AG04449 (cell line): ENCODE measurements at regions of chr2 and their contacts with region 1.

Region 1: DNA sequence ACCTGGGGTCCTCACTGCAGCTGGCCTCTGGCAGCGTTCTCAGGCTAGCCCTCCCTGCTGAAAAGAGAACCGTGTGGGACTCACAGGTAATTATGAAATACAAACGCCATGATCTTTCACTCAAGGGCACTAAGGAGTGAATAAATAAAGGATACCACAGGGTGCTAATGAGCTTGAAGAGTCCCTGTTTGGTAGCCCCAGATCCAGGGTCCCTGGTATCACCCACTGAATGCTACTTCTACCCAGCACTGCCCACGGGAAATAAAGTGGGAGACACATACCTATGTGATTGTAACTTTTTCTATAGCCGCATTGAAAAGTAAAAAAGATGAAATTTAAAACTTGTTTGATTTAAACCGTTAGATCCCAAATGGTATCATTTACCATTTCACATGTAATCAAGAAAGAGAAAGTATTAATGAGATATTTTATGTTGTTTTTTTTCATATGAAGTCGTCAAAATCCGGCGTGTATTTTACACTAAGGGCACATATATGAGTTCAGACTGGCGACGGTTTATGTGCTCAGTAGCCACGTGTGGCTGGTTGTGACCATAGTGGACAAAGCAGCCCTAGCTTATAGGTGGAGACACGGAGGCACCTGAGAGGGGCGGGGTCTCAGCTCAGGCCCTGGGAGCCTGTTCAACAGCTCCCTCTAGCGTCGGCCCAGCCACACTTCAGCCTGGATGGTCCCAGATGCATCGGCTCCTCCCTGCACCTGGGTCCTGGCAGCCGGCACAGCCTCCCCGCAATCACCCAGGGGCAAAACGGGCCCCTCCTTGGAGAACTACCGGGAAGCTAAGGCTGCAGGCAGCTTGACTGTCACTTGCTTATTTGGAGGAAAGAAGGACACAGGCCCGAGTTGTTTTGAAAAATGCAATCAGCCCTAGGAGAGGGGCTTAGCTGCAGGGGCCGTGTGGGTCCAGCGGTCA is 39.2 kb downstream of the ODC1 start:
- DNase-seq: no peak
- H3K4me3 ChIP-seq: no peak overlapping the region
- CTCF ChIP-seq: peak; percentile 98

Region 2: DNA sequence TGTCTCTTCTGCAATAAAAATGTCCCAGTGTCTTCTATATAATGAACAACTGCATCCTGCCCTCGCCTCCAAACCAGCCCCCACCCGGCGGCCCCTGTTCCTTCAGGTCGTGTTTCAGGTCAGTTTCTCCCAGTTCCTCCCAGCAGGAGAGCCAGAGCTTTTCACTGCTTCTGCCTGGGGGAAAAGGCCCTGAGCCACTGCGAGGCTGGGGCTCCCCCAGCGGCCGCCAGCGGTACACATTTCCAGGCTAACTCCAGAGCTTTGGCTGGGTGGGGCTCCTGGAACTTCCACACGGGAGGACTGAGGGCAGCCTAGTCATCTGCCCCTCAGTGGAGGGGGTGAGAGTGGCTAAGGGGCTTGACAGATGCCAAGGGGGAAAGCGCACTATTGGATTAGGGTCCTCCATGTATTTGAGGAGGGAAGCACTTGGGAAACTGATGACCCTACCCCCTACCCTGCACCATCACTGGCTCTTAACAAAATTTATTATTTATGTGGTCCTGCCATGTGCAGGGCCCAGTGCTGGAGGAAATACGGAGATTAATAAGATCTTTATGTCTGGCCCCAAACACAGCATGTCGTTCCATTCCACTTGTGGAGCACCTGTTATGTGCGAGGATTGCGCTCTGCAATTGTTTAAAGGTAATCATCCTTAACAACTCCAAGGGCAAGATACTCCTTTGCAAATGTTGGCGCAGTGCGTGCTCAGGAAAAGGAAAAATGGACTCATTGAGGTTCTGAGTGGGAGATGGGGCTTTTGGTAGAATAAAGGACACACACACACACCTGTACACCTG is 311.4 kb before region 1 on chr2:
- CTCF ChIA-PET with region 1: interaction called, 21 read pairs
- POLR2A ChIA-PET with region 1: no interaction called
- DNase-seq: no peak
- H3K4me3 ChIP-seq: no peak overlapping the region
- CTCF ChIP-seq: peak; percentile 97

Region 3: GRCh38 chr2:10135296-10136089 is 273.4 kb before region 1 on chr2:
- CTCF ChIA-PET with region 1: interaction called, 68 read pairs
- POLR2A ChIA-PET with region 1: no interaction called
- DNase-seq: no peak
- H3K4me3 ChIP-seq: no peak overlapping the region
- CTCF ChIP-seq: no peak

Region 4: GRCh38 chr2:10188216-10188615 is 220.7 kb before region 1 on chr2:
- CTCF ChIA-PET with region 1: interaction called, 11 read pairs
- POLR2A ChIA-PET with region 1: no interaction called
- DNase-seq: no peak
- H3K4me3 ChIP-seq: no peak overlapping the region
- CTCF ChIP-seq: peak; percentile 38

Region 5: GRCh38 chr2:10362096-10362897 is 46.6 kb before region 1 on chr2:
- CTCF ChIA-PET with region 1: interaction called, 13 read pairs
- POLR2A ChIA-PET with region 1: no interaction called
- DNase-seq: no peak
- H3K4me3 ChIP-seq: no peak overlapping the region
- CTCF ChIP-seq: no peak

Region 6: GRCh38 chr2:10424051-10424450 is 15.1 kb after region 1 on chr2:
- CTCF ChIA-PET with region 1: interaction called, 156 read pairs
- POLR2A ChIA-PET with region 1: no interaction called
- DNase-seq: peak; percentile 80
- H3K4me3 ChIP-seq: no peak overlapping the region
- CTCF ChIP-seq: no peak

Region 7: DNA sequence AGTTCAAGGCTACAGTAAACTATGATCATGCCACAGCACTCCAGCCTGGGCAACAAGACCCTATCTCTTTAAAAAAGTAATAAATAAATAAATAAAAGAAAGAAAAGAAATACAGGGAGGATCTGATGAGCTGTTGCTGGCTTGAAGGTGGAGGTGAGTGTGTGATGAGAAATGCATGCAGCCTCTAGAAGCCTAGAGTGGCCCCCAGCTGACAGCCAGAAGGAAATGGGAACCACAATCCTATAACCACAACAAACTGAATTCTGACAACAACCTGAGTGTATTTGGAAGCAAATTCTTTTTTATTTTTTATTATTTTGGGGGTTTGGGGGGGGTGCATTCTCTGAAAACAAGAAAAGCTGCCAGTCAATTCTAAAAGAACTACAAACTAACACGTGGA is 266.2 kb after region 1 on chr2:
- CTCF ChIA-PET with region 1: no interaction called
- POLR2A ChIA-PET with region 1: no interaction called
- DNase-seq: no peak
- H3K4me3 ChIP-seq: no peak overlapping the region
- CTCF ChIP-seq: no peak